PC-9 (cell line): ENCODE measurements at regions of chr2 and their contacts with region 1.

Region 1: GRCh38 chr2:190947711-190948251 is 66.2 kb downstream of the STAT1 start:
- DNase-seq: peak; percentile 35 to 75
- H3K4me3 ChIP-seq: no peak overlapping the region
- H3K27ac ChIP-seq: peak overlapping the region; percentile 46
- H3K4me1 ChIP-seq: peaks cover 33% of the 10 kb centered on the region
- H3K27me3 ChIP-seq: no peaks in the 10 kb centered on the region
- CTCF ChIP-seq: no peak

Region 2: GRCh38 chr2:190835303-190835930 is 112.4 kb before region 1 on chr2:
- CTCF ChIA-PET with region 1: no interaction called
- POLR2A ChIA-PET with region 1: interaction called, 11 read pairs
- intact Hi-C with region 1: loop called (anchors 5 kb)
- DNase-seq: peak in 1 of 2 experiments; percentile 49
- H3K4me3 ChIP-seq: no peak overlapping the region
- H3K27ac ChIP-seq: no peak overlapping the region
- H3K4me1 ChIP-seq: peaks cover 45% of the 10 kb centered on the region
- H3K27me3 ChIP-seq: no peaks in the 10 kb centered on the region
- CTCF ChIP-seq: no peak